ENCODE measurements at regions of chr6 and their contacts with region 1.

Region 1: DNA sequence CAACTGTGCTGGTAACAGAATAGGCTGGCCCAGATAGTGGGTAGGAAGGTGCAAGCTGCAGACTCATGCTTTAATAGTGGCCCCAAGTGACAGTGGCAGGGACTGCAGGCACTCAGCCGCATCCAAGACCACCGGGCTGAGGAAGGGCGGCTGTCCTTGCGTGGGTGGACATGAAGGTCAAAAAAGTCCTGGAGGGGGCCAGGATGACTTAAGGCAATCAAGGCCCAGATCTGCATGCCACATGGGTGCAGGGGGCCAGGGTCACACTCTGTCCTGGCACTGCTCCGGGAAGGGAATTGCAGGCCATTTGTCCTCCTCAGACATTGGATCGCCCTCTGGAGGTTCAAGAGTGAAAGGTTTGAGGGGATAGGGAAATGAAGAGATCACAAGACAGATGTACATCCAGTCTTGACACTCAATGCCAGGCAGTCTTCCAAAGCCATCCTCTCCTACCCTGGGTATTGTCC is 10.4 kb upstream of the VNN2 start:
- DNase-seq: peak; percentile 60
- ATAC-seq: peak; percentile 79
- H3K4me3 ChIP-seq: no peak overlapping the region
- H3K4me3 Mint-ChIP-seq: peak overlapping the region; percentile 27
- H3K27ac ChIP-seq: no peak overlapping the region
- H3K27ac Mint-ChIP-seq: peak overlapping the region; percentile 38
- H3K4me1 ChIP-seq: peaks cover 7 to 14% of the 10 kb centered on the region in 2 donors
- H3K4me1 Mint-ChIP-seq: peaks cover 22% of the 10 kb centered on the region
- H3K27me3 ChIP-seq: no peaks in the 10 kb centered on the region
- H3K27me3 Mint-ChIP-seq: no peaks in the 10 kb centered on the region
- CTCF ChIP-seq: peak; percentile 63

Region 2: GRCh38 chr6:132424827-132425575 is 343.1 kb before region 1 on chr6:
- CTCF ChIA-PET with region 1: no interaction called
- POLR2A ChIA-PET with region 1: no interaction called
- intact Hi-C with region 1: no loop called
- DNase-seq: no peak
- ATAC-seq: no peak
- H3K4me3 ChIP-seq: no peak overlapping the region
- H3K4me3 Mint-ChIP-seq: no peak overlapping the region
- H3K27ac ChIP-seq: no peak overlapping the region
- H3K27ac Mint-ChIP-seq: no peak overlapping the region
- H3K4me1 ChIP-seq: no peaks in the 10 kb centered on the region
- H3K4me1 Mint-ChIP-seq: no peaks in the 10 kb centered on the region
- H3K27me3 ChIP-seq: peaks cover 0 to 5% (median 2%) of the 10 kb centered on the region in 4 experiments
- H3K27me3 Mint-ChIP-seq: peaks cover 8% of the 10 kb centered on the region
- CTCF ChIP-seq: no peak

Region 3: DNA sequence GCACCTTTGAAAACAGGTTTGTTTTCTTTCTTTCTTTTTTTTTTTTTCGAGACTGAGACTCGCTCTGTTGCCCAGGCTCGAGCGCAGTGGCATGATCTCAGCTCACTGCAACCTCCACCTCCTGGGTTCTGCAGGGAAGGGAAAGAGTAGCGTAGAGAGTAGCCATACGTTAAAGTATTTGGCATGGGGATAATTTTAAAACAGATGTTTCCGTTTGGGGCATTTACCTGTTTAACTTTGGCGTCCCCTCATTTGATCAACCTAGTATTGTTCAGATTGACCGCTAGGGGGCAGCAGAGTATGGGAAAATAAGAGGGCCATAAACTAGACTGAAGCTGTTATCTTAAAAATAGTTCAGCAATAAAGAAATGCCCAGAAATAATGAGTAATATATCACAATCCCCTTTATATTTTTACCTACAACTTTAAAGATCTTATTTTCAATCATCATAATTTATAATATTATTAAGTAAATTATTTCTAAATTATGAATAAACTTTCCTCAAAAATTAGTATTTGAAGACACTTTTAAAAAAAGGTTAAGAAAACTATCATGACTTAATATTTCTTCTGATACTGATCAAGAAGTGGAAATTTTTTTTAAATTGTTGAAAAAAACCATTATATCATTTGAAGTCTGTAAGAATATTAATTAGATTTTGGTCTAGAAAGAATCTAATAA is 237.7 kb before region 1 on chr6:
- CTCF ChIA-PET with region 1: interaction called, 45 read pairs
- POLR2A ChIA-PET with region 1: no interaction called
- intact Hi-C with region 1: loop called (anchors 1 kb)
- DNase-seq: peak; percentile 82
- ATAC-seq: peak; percentile 71
- H3K4me3 ChIP-seq: peak overlapping the region in 4 of 5 experiments; percentile 7 to 54 (median 46)
- H3K4me3 Mint-ChIP-seq: peak overlapping the region; percentile 85
- H3K27ac ChIP-seq: no peak overlapping the region
- H3K27ac Mint-ChIP-seq: peak overlapping the region; percentile 77
- H3K4me1 ChIP-seq: peaks cover 3 to 4% of the 10 kb centered on the region in 2 donors
- H3K4me1 Mint-ChIP-seq: peaks cover 4% of the 10 kb centered on the region
- H3K27me3 ChIP-seq: no peaks in the 10 kb centered on the region
- H3K27me3 Mint-ChIP-seq: no peaks in the 10 kb centered on the region
- CTCF ChIP-seq: peak; percentile 90

Region 4: GRCh38 chr6:132865364-132865763 is 97.3 kb after region 1 on chr6:
- CTCF ChIA-PET with region 1: no interaction called
- POLR2A ChIA-PET with region 1: no interaction called
- intact Hi-C with region 1: no loop called
- DNase-seq: no peak
- ATAC-seq: no peak
- H3K4me3 ChIP-seq: no peak overlapping the region
- H3K4me3 Mint-ChIP-seq: no peak overlapping the region
- H3K27ac ChIP-seq: no peak overlapping the region
- H3K27ac Mint-ChIP-seq: no peak overlapping the region
- H3K4me1 ChIP-seq: no peaks in the 10 kb centered on the region
- H3K4me1 Mint-ChIP-seq: no peaks in the 10 kb centered on the region
- H3K27me3 ChIP-seq: peaks cover 0 to 9% (median 0%) of the 10 kb centered on the region in 4 experiments
- H3K27me3 Mint-ChIP-seq: peaks cover 11% of the 10 kb centered on the region
- CTCF ChIP-seq: no peak

Measured in B cell (primary cell).